Natural killer cell (primary cell): ENCODE measurements at regions of chr7 and their contacts with region 1.

Region 1: GRCh38 chr7:37510043-37510634 is 61.5 kb upstream of the ELMO1 start:
- DNase-seq: peak in 1 of 2 donors; percentile 63
- ATAC-seq: peak; percentile 60 to 71 (median 60)
- H3K4me3 ChIP-seq: no peak overlapping the region
- H3K4me3 Mint-ChIP-seq: no peak overlapping the region
- H3K27ac ChIP-seq: no peak overlapping the region
- H3K27ac Mint-ChIP-seq: no peak overlapping the region
- H3K4me1 ChIP-seq: no peaks in the 10 kb centered on the region
- H3K4me1 Mint-ChIP-seq: no peaks in the 10 kb centered on the region
- H3K27me3 ChIP-seq: peaks cover 2% of the 10 kb centered on the region
- H3K27me3 Mint-ChIP-seq: peaks cover 8 to 30% of the 10 kb centered on the region in 2 donors
- CTCF ChIP-seq: peak; percentile 78

Region 2: DNA sequence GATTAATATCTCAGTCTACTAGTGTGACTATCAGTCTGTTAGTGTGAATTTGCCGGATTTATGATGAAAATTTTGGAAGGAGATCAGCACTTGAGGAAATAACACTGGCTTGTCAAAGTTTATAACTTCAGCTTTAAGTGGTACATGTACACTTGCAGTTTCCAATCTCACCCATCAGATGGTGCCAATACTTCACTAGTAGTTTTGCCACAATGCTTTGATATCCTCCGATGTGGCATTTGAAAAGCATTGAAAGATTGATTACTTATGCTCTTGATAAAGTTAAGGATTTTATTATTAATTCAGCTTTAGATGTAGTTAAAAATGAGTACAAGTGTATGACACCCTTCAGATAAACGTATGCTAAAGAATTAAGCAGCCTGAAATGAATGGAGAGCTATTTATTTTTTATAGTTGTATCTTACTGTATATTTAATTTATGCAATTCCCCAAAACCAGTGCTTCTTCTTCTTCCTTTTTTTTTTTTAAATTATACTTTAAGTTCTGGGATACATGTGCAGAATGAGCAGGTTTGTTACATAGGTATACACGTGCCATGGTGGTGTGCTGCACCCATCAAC is 1022.3 kb before region 1 on chr7:
- intact Hi-C with region 1: loop called (anchors 10 kb)
- DNase-seq: peak in 1 of 2 donors; percentile 83
- ATAC-seq: peak; percentile 80 to 87 (median 84)
- H3K4me3 ChIP-seq: no peak overlapping the region
- H3K4me3 Mint-ChIP-seq: no peak overlapping the region
- H3K27ac ChIP-seq: no peak overlapping the region
- H3K27ac Mint-ChIP-seq: no peak overlapping the region
- H3K4me1 ChIP-seq: no peaks in the 10 kb centered on the region
- H3K4me1 Mint-ChIP-seq: peaks cover 0 to 5% of the 10 kb centered on the region in 2 donors
- H3K27me3 ChIP-seq: no peaks in the 10 kb centered on the region
- H3K27me3 Mint-ChIP-seq: no peaks in the 10 kb centered on the region
- CTCF ChIP-seq: peak; percentile 79

Region 3: DNA sequence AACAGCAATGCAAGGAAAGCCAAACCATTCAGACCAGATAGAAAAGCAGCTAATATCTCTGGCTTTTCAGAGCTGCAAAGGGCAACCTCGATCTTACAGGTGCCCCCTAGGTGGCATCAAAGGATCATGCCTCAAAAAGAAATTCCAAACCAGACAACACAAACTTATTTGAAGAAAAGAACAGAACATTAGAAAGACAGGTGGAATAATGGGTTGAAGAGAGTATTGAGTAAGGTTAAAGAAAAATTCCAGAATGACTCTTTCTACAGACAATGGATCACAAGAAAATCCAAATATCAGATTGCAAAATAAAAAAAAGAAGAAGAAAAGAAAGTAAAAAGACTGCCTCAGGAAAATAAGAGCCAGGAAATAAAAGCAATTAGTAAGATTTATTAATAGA is 275.2 kb before region 1 on chr7:
- intact Hi-C with region 1: loop called (anchors 10 kb)
- DNase-seq: peak in 1 of 2 donors; percentile 64
- ATAC-seq: no peak
- H3K4me3 ChIP-seq: no peak overlapping the region
- H3K4me3 Mint-ChIP-seq: no peak overlapping the region
- H3K27ac ChIP-seq: no peak overlapping the region
- H3K27ac Mint-ChIP-seq: no peak overlapping the region
- H3K4me1 ChIP-seq: no peaks in the 10 kb centered on the region
- H3K4me1 Mint-ChIP-seq: peaks cover 5 to 10% of the 10 kb centered on the region in 2 donors
- H3K27me3 ChIP-seq: no peaks in the 10 kb centered on the region
- H3K27me3 Mint-ChIP-seq: no peaks in the 10 kb centered on the region
- CTCF ChIP-seq: peak; percentile 53

Region 4: GRCh38 chr7:37833107-37833817 is 323.1 kb after region 1 on chr7:
- intact Hi-C with region 1: loop called (anchors 5 kb)
- DNase-seq: peak; percentile 29 to 76
- ATAC-seq: peak; percentile 76 to 86 (median 79)
- H3K4me3 ChIP-seq: peak overlapping the region; percentile 38
- H3K4me3 Mint-ChIP-seq: peak overlapping the region; percentile 81
- H3K27ac ChIP-seq: no peak overlapping the region
- H3K27ac Mint-ChIP-seq: peak overlapping the region in 1 of 2 donors; percentile 84
- H3K4me1 ChIP-seq: peaks cover 10% of the 10 kb centered on the region
- H3K4me1 Mint-ChIP-seq: peaks cover 16 to 19% of the 10 kb centered on the region in 2 donors
- H3K27me3 ChIP-seq: no peaks in the 10 kb centered on the region
- H3K27me3 Mint-ChIP-seq: peaks cover 0 to 6% of the 10 kb centered on the region in 2 donors
- CTCF ChIP-seq: peak; percentile 83